ENCODE measurements at regions of chr4 and their contacts with region 1.

Region 1: GRCh38 chr4:113761620-113762185 is at the start of gene CAMK2D:
- DNase-seq: peak; percentile 92
- total RNA-seq, gene CAMK2D: 217 TPM

Region 2: GRCh38 chr4:112927544-112927943 is 834.2 kb before region 1 on chr4:
- intact Hi-C with region 1: no loop called
- DNase-seq: no peak

Region 3: DNA sequence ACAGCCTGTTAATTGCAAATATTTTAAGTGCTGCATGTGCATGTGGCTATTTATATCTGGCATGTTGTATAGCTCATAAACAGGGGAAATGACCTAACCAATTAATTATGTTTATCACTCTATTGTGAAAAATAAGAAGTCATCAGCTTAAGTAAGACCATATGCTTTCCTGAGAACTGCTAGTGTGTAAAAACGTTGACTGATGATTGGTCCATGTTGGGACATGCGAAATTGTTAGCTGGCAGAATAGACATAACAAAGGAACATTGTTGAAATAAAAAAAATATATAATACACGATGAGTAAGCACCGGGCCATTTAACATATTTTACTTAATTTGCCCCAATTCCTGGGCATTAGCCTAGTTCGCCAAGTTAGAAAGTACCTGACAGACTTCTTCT is 504.8 kb before region 1 on chr4:
- intact Hi-C with region 1: no loop called
- DNase-seq: no peak

Region 4: GRCh38 chr4:113445286-113445685 is 316.4 kb before region 1 on chr4:
- intact Hi-C with region 1: loop called (anchors 5 kb)
- DNase-seq: no peak

Region 5: DNA sequence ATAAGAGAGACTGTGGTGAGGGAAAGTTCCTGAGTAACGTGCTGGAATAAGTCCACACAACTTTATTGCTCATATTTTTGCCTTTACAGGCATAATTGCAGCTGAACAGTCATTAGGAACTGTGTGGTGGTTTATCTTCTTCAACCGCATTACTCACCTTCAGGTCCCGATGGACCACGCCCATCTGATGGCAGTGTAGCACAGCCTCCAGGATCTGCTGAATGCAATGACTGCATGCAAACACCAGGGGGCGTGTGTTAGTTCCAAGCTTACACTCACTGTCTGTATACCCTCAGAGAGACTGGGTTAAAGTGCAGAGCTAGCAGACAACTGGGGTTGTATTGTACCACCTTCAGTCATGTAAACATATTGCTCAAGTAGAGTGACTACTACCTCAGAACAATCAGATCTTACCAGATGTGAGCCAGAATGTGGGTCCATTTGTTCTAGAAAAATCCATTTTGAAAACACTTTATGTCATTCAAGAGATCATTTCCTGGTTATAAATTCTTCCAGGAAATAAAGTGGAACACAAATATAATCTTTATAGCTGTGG is 214.1 kb before region 1 on chr4:
- intact Hi-C with region 1: loop called (anchors 1 kb)
- DNase-seq: peak; percentile 91

Region 6: DNA sequence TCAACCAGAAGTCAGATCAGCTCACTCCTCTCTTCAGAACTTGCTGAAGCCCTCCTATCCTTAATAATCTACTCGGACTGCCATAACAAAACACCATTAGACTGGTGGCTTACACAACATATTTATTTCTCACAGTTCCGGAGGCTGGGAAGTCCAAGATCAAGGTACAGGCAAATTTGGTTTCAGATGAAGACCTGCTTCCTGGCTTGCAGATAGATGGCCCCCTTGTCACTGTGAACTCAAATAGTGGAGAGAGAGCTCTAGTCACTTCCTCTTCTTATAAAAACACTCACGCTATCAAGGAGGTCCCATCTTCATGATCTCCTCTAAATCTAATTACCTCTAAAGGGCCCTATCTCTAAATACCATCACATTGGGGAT is 125.3 kb before region 1 on chr4:
- intact Hi-C with region 1: loop called (anchors 2 kb)
- DNase-seq: no peak

Region 7: GRCh38 chr4:113844369-113844768 is 82.7 kb after region 1 on chr4:
- intact Hi-C with region 1: no loop called
- DNase-seq: no peak

Region 8: GRCh38 chr4:114378306-114378903 is 616.7 kb after region 1 on chr4:
- intact Hi-C with region 1: loop called (anchors 10 kb)
- DNase-seq: no peak